ENCODE measurements at regions of chr3 and their contacts with region 1.

Region 1: GRCh38 chr3:49929331-49930240 is at the start of gene MON1A:
- DNase-seq: peak; percentile 64 to 91 (median 85)
- ATAC-seq: peak; percentile 94
- H3K4me3 ChIP-seq: peak within 1 kb of the TSS; percentile 80 to 99
- H3K4me3 Mint-ChIP-seq: peak within 1 kb of the TSS; percentile 82
- H3K27ac ChIP-seq: peak within 1 kb of the TSS; percentile 68 to 72
- H3K27ac Mint-ChIP-seq: peak within 1 kb of the TSS; percentile 79
- H3K4me1 ChIP-seq: peaks cover 12% of the 10 kb centered on the region
- H3K4me1 Mint-ChIP-seq: peaks cover 34% of the 10 kb centered on the region
- H3K27me3 ChIP-seq: no peaks in the 10 kb centered on the region
- H3K27me3 Mint-ChIP-seq: no peaks in the 10 kb centered on the region
- CTCF ChIP-seq: no peak
- total RNA-seq, gene MON1A: 1.2 TPM

Region 2: DNA sequence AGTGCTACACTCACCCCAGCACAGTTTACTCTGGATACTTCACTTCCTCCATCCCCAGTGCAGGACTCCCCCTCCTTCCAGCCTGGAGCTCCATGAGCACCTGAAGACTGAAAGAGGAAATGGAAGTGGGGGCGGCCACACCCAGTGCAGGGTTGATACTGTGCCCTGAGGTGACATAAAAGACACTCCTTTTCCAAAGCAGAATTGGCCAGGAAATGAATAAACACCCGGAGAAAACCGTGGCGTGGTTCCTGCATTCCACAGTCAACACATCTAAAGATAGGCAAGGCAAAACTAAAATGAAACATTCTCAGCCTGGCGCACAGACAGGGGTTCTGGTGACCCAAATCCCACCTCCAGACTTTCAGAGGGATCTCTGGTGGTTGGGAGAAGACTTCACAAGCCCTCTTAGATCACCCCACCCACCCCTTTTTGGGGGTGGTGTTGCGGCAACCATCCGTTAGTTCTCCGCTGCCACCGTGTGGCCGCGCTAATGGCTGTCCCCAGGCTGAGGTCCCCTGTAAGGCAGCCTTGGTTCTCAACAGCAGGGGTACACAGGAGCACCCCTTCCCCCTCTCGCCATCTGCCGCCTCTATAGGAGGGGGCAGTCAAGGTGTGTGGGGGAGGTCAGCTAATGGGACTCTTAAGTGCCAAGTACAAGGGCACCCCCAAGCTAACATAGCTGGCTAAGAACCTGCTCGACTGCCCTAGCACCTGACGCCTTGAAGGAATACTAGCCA is 23.4 kb before region 1 on chr3:
- CTCF ChIA-PET with region 1: no interaction called
- POLR2A ChIA-PET with region 1: no interaction called
- intact Hi-C with region 1: loop called (anchors 1 to 2 kb)
- DNase-seq: peak; percentile 10 to 69 (median 48)
- ATAC-seq: peak; percentile 43
- H3K4me3 ChIP-seq: no peak overlapping the region
- H3K4me3 Mint-ChIP-seq: peak overlapping the region; percentile 37
- H3K27ac ChIP-seq: no peak overlapping the region
- H3K27ac Mint-ChIP-seq: peak overlapping the region; percentile 37
- H3K4me1 ChIP-seq: peaks cover 22% of the 10 kb centered on the region
- H3K4me1 Mint-ChIP-seq: peaks cover 29% of the 10 kb centered on the region
- H3K27me3 ChIP-seq: no peaks in the 10 kb centered on the region
- H3K27me3 Mint-ChIP-seq: no peaks in the 10 kb centered on the region
- CTCF ChIP-seq: peak; percentile 54

Region 3: DNA sequence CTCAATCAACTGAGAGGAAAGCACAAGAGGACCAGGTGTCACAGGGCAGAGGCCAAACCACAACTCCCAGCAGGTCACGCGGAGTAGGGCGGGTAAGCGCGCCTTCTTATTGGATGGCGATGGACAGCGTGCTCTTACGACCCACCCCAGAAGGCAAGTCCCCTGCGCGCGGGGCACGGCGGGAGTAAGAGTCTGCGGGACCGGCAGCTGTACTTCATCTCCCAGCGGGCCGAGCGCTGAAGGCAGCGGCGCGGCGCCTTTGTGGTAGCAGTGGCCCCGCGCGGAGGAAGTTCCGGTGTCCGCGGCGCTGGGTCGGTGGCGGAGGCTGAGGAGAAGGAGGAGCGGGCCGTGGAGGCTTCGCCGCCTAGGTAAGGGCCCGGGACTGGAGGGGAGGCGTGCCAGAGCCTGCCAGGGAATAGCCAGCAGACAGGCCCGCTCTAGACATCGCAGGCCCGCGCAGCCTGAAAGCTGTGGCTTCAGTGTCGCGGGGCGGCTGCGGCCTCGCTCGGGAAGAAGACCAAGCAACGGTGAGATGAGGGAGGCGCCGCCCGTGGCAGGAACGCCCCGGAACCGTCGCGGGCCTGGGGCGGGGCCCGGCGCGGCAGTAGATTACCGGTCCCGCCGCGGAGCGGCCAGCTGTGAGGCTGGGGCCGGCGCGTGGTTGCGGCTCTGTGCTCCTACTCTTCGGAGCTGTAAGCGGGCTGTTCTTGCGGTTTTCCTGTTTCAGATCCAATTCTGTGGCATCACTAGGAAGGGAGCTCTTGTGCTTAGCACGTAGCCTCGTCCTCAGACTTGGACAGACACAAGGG is 10.5 kb after region 1 on chr3 and contains the start of gene RBM6:
- CTCF ChIA-PET with region 1: interaction called, 11 read pairs
- POLR2A ChIA-PET with region 1: interaction called, 30 read pairs
- intact Hi-C with region 1: loop called (anchors 1 kb)
- DNase-seq: peak; percentile 82 to 97 (median 93)
- ATAC-seq: peak; percentile 98
- H3K4me3 ChIP-seq: peak within 1 kb of the TSS; percentile 78 to 98
- H3K4me3 Mint-ChIP-seq: peak within 1 kb of the TSS; percentile 99
- H3K27ac ChIP-seq: peak within 1 kb of the TSS; percentile 67 to 99
- H3K27ac Mint-ChIP-seq: peak within 1 kb of the TSS; percentile 98
- H3K4me1 ChIP-seq: peaks cover 15% of the 10 kb centered on the region
- H3K4me1 Mint-ChIP-seq: peaks cover 30% of the 10 kb centered on the region
- H3K27me3 ChIP-seq: no peaks in the 10 kb centered on the region
- H3K27me3 Mint-ChIP-seq: no peaks in the 10 kb centered on the region
- CTCF ChIP-seq: no peak
- total RNA-seq, gene RBM6: 92.1 to 95.0 TPM

Region 4: GRCh38 chr3:50088725-50089608 is 159.4 kb after region 1 on chr3 and contains the start of gene RBM5:
- CTCF ChIA-PET with region 1: no interaction called
- POLR2A ChIA-PET with region 1: interaction called, 3 read pairs
- intact Hi-C with region 1: loop called in 1 of 2 experiments (anchors 2 kb)
- DNase-seq: peak; percentile 80 to 94 (median 92)
- ATAC-seq: peak; percentile 99
- H3K4me3 ChIP-seq: peak within 1 kb of the TSS; percentile 100
- H3K4me3 Mint-ChIP-seq: peak within 1 kb of the TSS; percentile 96
- H3K27ac ChIP-seq: peak within 1 kb of the TSS; percentile 97 to 99
- H3K27ac Mint-ChIP-seq: peak within 1 kb of the TSS; percentile 98
- H3K4me1 ChIP-seq: peaks cover 27% of the 10 kb centered on the region
- H3K4me1 Mint-ChIP-seq: peaks cover 34% of the 10 kb centered on the region
- H3K27me3 ChIP-seq: no peaks in the 10 kb centered on the region
- H3K27me3 Mint-ChIP-seq: no peaks in the 10 kb centered on the region
- CTCF ChIP-seq: no peak
- total RNA-seq, gene RBM5: 376 to 409 TPM

Region 5: DNA sequence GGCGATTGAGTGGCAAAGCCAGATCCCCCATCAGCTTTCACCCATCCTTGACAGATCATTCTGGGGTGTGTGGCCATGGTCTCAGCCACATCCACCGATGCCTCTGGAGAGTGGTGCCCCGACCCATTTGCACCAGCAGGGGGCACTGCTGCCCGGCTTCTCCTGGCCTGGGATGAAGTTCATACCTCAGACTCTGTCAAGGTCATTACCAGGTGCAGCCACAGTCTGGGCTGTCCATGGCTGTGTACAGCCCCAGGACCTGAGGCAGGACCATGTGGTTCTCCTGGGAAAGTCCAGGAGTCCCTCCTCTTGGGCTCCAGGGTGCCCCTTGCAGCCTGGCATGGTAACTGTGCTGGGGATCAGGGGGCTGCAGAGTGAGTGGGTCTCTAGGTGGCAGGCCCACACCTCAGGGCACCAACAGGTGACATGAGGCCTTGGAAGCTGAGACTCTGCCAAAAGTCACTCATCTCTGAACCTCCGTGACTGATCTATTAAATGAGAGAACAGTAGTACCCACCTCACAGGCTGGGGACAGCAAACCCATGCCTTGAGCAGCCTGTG is 506.6 kb after region 1 on chr3:
- CTCF ChIA-PET with region 1: no interaction called
- POLR2A ChIA-PET with region 1: no interaction called
- intact Hi-C with region 1: no loop called
- DNase-seq: peak; percentile 62 to 89 (median 80)
- ATAC-seq: peak; percentile 98
- H3K4me3 ChIP-seq: no peak overlapping the region
- H3K4me3 Mint-ChIP-seq: no peak overlapping the region
- H3K27ac ChIP-seq: no peak overlapping the region
- H3K27ac Mint-ChIP-seq: no peak overlapping the region
- H3K4me1 ChIP-seq: peaks cover 7% of the 10 kb centered on the region
- H3K4me1 Mint-ChIP-seq: peaks cover 4% of the 10 kb centered on the region
- H3K27me3 ChIP-seq: no peaks in the 10 kb centered on the region
- H3K27me3 Mint-ChIP-seq: no peaks in the 10 kb centered on the region
- CTCF ChIP-seq: peak; percentile 87

Measured in CD8-positive, alpha-beta T cell (primary cell).